Calu3 (cell line): ENCODE measurements at regions of chr4 and their contacts with region 1.

Region 1: GRCh38 chr4:25654971-25655963 is at the start of gene SLC34A2:
- DNase-seq: peak; percentile 75
- H3K4me3 Mint-ChIP-seq: peak within 1 kb of the TSS; percentile 75
- H3K27ac Mint-ChIP-seq: peak within 1 kb of the TSS; percentile 20
- H3K4me1 Mint-ChIP-seq: peaks cover 41% of the 10 kb centered on the region
- H3K27me3 Mint-ChIP-seq: no peaks in the 10 kb centered on the region
- CTCF ChIP-seq: no peak
- total RNA-seq, gene SLC34A2: 12.8 and 23.0 TPM in 2 replicates

Region 2: GRCh38 chr4:24980064-24980690 is 675.1 kb before region 1 on chr4:
- CTCF ChIA-PET with region 1: no interaction called
- intact Hi-C with region 1: no loop called
- DNase-seq: peak; percentile 53
- H3K4me3 Mint-ChIP-seq: no peak overlapping the region
- H3K27ac Mint-ChIP-seq: no peak overlapping the region
- H3K4me1 Mint-ChIP-seq: no peaks in the 10 kb centered on the region
- H3K27me3 Mint-ChIP-seq: peaks cover 6% of the 10 kb centered on the region
- CTCF ChIP-seq: peak; percentile 47

Region 3: DNA sequence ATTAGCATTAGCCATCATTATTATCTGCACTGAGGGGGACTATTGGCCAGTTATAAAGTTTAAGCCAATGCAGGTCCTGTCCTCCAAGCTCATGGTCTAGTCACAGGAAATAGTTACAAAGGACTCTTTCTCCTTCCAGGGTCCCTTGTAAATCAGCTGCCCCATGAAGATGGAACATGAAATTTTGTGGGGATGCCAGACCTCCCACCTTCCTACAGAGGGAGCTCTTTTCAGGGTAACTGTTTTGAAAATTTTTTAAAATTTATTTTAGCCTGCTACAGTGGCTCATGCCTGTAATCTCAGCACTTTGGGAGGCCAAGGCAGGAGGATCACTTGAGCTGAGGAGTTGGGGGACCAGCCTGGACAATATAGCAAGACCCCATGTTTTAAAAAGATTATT is 124.0 kb before region 1 on chr4:
- CTCF ChIA-PET with region 1: no interaction called
- intact Hi-C with region 1: loop called (anchors 10 kb)
- DNase-seq: no peak
- H3K4me3 Mint-ChIP-seq: no peak overlapping the region
- H3K27ac Mint-ChIP-seq: no peak overlapping the region
- H3K4me1 Mint-ChIP-seq: peaks cover 18% of the 10 kb centered on the region
- H3K27me3 Mint-ChIP-seq: no peaks in the 10 kb centered on the region
- CTCF ChIP-seq: peak; percentile 48

Region 4: DNA sequence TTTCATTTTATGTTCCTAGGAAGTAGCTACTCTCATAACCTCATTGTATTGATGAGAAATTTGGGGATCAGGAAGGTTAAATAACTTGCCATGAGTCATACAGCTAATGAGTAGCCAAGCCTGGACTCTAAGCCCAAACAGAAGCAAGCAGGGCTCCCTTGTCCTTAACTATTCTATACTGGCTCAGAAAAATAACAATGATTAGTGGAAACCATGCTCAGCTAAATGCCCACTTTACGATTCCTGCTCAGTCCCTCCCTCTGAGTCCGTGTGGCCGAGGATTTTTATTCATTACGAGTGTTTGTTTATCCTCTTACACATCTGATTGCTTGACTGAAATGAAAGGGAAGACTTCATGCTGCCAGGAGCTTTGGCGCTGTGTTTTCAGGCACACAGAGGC is 101.2 kb after region 1 on chr4:
- CTCF ChIA-PET with region 1: no interaction called
- intact Hi-C with region 1: loop called (anchors 10 kb)
- DNase-seq: peak; percentile 23
- H3K4me3 Mint-ChIP-seq: no peak overlapping the region
- H3K27ac Mint-ChIP-seq: peak overlapping the region; percentile 13
- H3K4me1 Mint-ChIP-seq: peaks cover 24% of the 10 kb centered on the region
- H3K27me3 Mint-ChIP-seq: no peaks in the 10 kb centered on the region
- CTCF ChIP-seq: no peak